Transverse colon (tissue), 4 donors: ENCODE measurements at regions of chr18 and their contacts with region 1.

Region 1: GRCh38 chr18:32086861-32087260 is 4.8 kb upstream of the RNF138 start:
- DNase-seq: no peak
- H3K4me3 ChIP-seq: no peak overlapping the region
- H3K27ac ChIP-seq: peak overlapping the region in 1 of 4 donors; percentile 11
- H3K4me1 ChIP-seq: peaks cover 0 to 32% (median 13%) of the 10 kb centered on the region in 4 donors
- H3K27me3 ChIP-seq: no peaks in the 10 kb centered on the region
- CTCF ChIP-seq: no peak
- EP300 ChIP-seq: no peak
- POLR2A ChIP-seq: no peak

Region 2: GRCh38 chr18:31954349-31954748 is 132.5 kb before region 1 on chr18:
- in situ Hi-C with region 1: loop called in 1 of 4 experiments (anchors 25 kb)
- intact Hi-C with region 1: loop called (anchors 10 kb)
- DNase-seq: peak; percentile 49
- H3K4me3 ChIP-seq: no peak overlapping the region
- H3K27ac ChIP-seq: no peak overlapping the region
- H3K4me1 ChIP-seq: no peaks in the 10 kb centered on the region
- H3K27me3 ChIP-seq: no peaks in the 10 kb centered on the region
- CTCF ChIP-seq: no peak
- EP300 ChIP-seq: no peak
- POLR2A ChIP-seq: no peak

Region 3: DNA sequence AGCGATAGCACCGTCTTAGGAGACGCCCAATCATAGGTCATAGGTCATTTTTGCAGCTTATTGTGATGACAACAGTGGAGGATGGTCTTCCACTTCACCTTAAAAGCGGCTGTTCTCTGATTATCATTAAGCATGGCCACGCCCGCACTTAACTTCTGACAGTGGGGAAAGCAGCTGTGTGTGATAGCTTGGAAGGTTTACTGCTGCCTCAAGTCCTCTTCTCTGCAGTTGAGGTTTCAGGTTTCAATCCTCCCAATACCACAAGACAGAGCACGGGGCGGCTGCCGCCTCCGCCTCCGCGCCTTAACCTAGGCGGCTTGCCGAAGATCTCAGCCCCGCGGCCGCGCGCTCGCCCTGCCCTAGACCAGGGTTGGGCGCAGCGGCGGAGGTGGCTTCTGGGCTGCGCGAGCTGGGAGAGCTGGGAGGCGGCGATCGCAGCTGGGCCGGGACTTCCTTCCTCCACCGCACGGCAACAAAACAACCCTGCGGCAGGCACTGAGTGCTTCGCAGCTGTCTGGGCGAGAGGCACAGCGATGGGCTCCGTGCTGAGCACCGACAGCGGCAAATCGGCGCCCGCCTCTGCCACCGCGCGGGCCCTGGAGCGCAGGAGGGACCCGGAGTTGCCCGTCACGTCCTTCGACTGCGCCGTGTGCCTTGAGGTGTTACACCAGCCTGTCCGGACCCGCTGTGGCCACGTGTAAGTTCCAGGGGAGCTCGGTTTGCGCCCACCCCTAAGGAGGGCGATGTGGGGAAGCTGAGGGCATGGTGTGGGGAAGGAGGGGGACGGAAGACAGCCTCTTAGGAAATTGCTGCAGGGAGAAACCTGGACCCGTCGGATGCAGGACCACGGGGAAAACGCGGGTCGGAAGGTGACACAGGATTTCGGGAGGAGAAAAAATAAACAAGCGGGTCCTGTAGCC is 68.3 kb before region 1 on chr18 and contains the start of gene RNF125:
- in situ Hi-C with region 1: loop called in 1 of 4 experiments (anchors 10 kb)
- intact Hi-C with region 1: no loop called
- DNase-seq: peak; percentile 85
- H3K4me3 ChIP-seq: peak within 1 kb of the TSS; percentile 46 to 57 (median 52)
- H3K27ac ChIP-seq: peak within 1 kb of the TSS; percentile 82 to 92 (median 88)
- H3K4me1 ChIP-seq: peaks cover 0 to 41% (median 15%) of the 10 kb centered on the region in 4 donors
- H3K27me3 ChIP-seq: no peaks in the 10 kb centered on the region
- CTCF ChIP-seq: peak in 1 of 5 experiments; percentile 34
- EP300 ChIP-seq: no peak
- POLR2A ChIP-seq: peak; percentile 85
- total RNA-seq, gene RNF125: 7.9 to 12.1 (median 10.3) TPM

Region 4: DNA sequence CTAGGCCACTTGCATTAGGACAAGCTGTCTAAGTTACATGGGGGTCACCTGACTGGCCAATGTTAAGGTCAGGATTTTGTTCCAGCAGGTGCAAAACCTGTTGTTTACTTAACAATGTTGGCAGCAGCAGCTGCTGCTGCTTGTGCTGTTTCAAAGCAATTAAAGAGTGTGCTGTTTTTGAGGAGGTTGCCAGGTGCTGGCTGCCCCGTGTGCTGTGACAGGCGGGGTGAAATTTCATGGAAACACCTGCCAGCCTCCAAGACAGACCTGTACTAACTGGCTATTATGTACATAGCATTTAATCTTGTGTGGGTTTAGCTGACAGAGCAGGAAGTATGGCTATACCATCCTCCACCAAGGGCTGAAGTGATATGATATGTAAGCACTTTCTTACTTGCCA is 1716.1 kb after region 1 on chr18:
- in situ Hi-C with region 1: no loop called
- intact Hi-C with region 1: no loop called
- DNase-seq: peak; percentile 72
- H3K4me3 ChIP-seq: no peak overlapping the region
- H3K27ac ChIP-seq: peak overlapping the region; percentile 33 to 50 (median 40)
- H3K4me1 ChIP-seq: peaks cover 0 to 13% (median 5%) of the 10 kb centered on the region in 4 donors
- H3K27me3 ChIP-seq: no peaks in the 10 kb centered on the region
- CTCF ChIP-seq: no peak
- EP300 ChIP-seq: no peak
- POLR2A ChIP-seq: no peak